GM12878 (cell line): ENCODE measurements at regions of chr7 and their contacts with region 1.

Region 1: GRCh38 chr7:43108255-43109011 is 4.0 kb upstream of the HECW1 start:
- DNase-seq: peak; percentile 31
- ATAC-seq: peak; percentile 88
- H3K4me3 ChIP-seq: no peak overlapping the region
- H3K27ac ChIP-seq: no peak overlapping the region
- H3K4me1 ChIP-seq: no peaks in the 10 kb centered on the region
- H3K27me3 ChIP-seq: no peaks in the 10 kb centered on the region
- CTCF ChIP-seq: peak; percentile 89 to 98 (median 95); a peak in 5 of 6 replicates
- EP300 ChIP-seq: no peak
- POLR2A ChIP-seq: no peak
- RAD21 ChIP-seq: peak; percentile 86

Region 2: DNA sequence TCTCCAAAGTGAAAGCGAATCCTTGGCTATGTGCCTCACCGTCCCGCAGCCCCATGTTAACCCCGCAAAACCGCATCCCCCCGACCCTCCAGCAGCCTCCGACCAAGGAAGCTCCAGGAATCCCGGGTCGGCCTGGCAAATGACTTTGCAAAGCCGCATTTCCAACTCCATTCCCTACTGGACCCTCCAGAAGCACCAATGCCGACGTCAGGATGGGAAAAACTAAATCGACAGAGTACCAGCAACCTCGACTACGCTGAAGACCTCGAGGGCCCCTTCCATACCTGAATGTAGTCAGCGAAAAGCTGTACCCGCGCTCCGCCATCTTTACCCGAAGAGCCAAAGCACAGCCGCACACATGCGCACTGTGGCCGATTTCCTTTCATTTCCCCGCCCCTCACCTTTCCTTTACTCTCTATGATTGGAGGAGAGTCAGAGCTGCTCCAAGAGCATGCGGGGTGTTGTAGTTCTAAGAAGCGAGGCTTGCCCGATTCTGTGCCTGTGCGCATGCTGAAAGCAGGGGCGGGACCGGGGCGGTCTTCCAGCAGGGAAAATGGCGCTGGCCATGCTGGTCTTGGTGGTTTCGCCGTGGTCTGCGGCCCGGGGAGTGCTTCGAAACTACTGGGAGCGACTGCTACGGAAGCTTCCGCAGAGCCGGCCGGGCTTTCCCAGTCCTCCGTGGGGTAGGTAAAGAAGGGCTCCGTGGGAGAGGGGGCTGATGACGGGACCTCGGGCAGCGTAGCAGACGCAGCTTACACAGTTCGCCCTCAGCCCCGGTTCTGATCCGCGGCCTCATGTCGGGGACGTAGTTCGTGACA is 176.4 kb before region 1 on chr7 and contains the starts of genes MRPL32 and PSMA2:
- CTCF ChIA-PET with region 1: interaction called, 4 read pairs
- POLR2A ChIA-PET with region 1: no interaction called
- RAD21 ChIA-PET with region 1: interaction called, 10 read pairs
- SMC1A ChIA-PET with region 1: interaction called, 9 read pairs
- in situ Hi-C with region 1: no loop called
- intact Hi-C with region 1: no loop called
- DNase-seq: peak; percentile 95
- ATAC-seq: peak; percentile 97
- H3K4me3 ChIP-seq: peak within 1 kb of the TSS; percentile 94
- H3K27ac ChIP-seq: peak within 1 kb of the TSS; percentile 86
- H3K4me1 ChIP-seq: peaks cover 15% of the 10 kb centered on the region; the same call in 1 of the 2 replicates
- H3K27me3 ChIP-seq: no peaks in the 10 kb centered on the region
- CTCF ChIP-seq: no peak
- EP300 ChIP-seq: no peak
- POLR2A ChIP-seq: peak; percentile 96
- RAD21 ChIP-seq: no peak
- polyA plus RNA-seq, gene MRPL32: 274 to 339 TPM
- polyA plus RNA-seq, gene PSMA2: 1,068 to 1,223 TPM

Region 3: GRCh38 chr7:42960762-42961161 is 147.7 kb before region 1 on chr7:
- CTCF ChIA-PET with region 1: interaction called, 14 read pairs
- POLR2A ChIA-PET with region 1: no interaction called
- RAD21 ChIA-PET with region 1: interaction called, 3 read pairs
- SMC1A ChIA-PET with region 1: interaction called, 3 read pairs
- in situ Hi-C with region 1: no loop called
- intact Hi-C with region 1: no loop called
- DNase-seq: no peak
- ATAC-seq: peak; percentile 90
- H3K4me3 ChIP-seq: no peak overlapping the region
- H3K27ac ChIP-seq: no peak overlapping the region
- H3K4me1 ChIP-seq: no peaks in the 10 kb centered on the region
- H3K27me3 ChIP-seq: no peaks in the 10 kb centered on the region
- CTCF ChIP-seq: no peak
- EP300 ChIP-seq: no peak
- POLR2A ChIP-seq: no peak
- RAD21 ChIP-seq: no peak

Region 4: DNA sequence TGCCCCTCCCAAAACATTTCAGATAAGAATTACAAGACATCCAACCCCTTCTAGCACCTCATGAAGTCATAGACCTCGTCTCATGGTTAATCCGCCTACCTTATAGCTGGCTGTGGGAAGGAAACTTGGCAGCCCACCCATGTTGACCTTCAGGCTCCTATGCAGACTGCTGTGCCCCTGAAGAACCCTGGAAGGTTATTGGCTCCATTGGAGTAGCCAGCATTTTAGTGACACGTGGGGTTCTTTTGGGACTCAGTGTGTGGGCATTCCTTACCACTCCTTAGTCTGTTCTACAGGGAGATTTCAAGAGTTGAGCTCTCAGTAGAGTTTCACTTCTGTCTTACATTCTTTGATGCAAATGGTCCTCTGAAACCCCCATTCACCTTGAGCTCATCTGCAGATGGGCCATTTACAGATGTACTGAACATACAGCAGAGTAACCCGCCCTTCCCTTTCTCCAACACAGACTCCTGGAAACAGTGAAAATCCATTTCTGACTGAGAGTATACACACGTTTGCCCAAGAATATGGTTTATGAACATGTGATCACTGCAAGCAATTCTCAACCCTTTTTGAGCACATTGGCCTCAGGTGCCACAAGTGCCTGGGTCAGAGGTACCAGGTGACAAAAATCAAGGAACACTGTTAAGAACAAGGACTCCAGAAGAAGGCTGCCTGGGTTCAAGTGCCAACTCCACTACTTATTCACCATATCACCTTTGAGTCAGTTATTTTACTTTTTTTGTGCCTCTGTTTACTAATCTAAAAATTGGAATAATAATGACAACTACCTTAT is 50.0 kb before region 1 on chr7:
- CTCF ChIA-PET with region 1: interaction called, 11 read pairs
- POLR2A ChIA-PET with region 1: no interaction called
- RAD21 ChIA-PET with region 1: interaction called, 4 read pairs
- SMC1A ChIA-PET with region 1: interaction called, 5 read pairs
- in situ Hi-C with region 1: no loop called
- intact Hi-C with region 1: no loop called
- DNase-seq: peak; percentile 53
- ATAC-seq: peak; percentile 61
- H3K4me3 ChIP-seq: no peak overlapping the region
- H3K27ac ChIP-seq: no peak overlapping the region
- H3K4me1 ChIP-seq: peaks cover 17% of the 10 kb centered on the region
- H3K27me3 ChIP-seq: no peaks in the 10 kb centered on the region
- CTCF ChIP-seq: no peak
- EP300 ChIP-seq: no peak
- POLR2A ChIP-seq: no peak
- RAD21 ChIP-seq: no peak

Region 5: DNA sequence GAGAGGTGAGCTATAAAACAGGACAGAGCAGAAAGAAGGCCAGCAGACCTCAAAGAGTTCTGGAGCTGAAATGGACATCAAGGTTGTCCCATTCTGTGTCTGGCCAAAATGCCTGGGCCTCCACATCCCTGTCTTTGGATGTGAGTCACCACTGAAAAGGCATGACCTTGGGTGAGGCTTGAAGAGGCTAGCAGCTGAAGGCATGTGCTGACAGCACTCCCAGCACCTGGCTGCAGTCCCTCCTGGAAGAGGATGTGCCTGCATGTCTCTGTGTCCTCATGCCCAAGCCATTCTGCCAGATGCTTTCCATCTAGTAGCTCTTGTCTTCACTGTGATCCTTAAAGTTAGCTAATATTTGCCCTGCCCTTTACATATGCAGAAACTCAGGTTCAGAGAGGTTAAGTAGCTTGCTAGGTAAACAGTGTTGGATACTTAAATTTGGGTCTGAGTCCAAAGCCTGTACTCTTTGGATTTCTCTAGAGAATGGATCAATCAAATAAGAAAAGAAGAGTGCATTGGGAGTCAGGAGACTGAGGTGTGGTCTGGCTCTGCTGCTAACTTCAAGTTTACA is 39.8 kb after region 1 on chr7:
- CTCF ChIA-PET with region 1: no interaction called
- POLR2A ChIA-PET with region 1: no interaction called
- RAD21 ChIA-PET with region 1: no interaction called
- SMC1A ChIA-PET with region 1: no interaction called
- in situ Hi-C with region 1: no loop called
- intact Hi-C with region 1: no loop called
- DNase-seq: no peak
- ATAC-seq: no peak
- H3K4me3 ChIP-seq: no peak overlapping the region
- H3K27ac ChIP-seq: no peak overlapping the region
- H3K4me1 ChIP-seq: no peaks in the 10 kb centered on the region
- H3K27me3 ChIP-seq: no peaks in the 10 kb centered on the region; a peak in 1 of 4 replicates
- CTCF ChIP-seq: no peak
- EP300 ChIP-seq: no peak
- POLR2A ChIP-seq: no peak
- RAD21 ChIP-seq: no peak

Region 6: GRCh38 chr7:43170571-43170970 is 62.1 kb after region 1 on chr7:
- CTCF ChIA-PET with region 1: interaction called, 10 read pairs
- POLR2A ChIA-PET with region 1: no interaction called
- RAD21 ChIA-PET with region 1: no interaction called
- SMC1A ChIA-PET with region 1: no interaction called
- in situ Hi-C with region 1: no loop called
- intact Hi-C with region 1: no loop called
- DNase-seq: no peak
- ATAC-seq: peak; percentile 11; the same call in 1 of the 3 replicates
- H3K4me3 ChIP-seq: no peak overlapping the region
- H3K27ac ChIP-seq: no peak overlapping the region
- H3K4me1 ChIP-seq: no peaks in the 10 kb centered on the region
- H3K27me3 ChIP-seq: no peaks in the 10 kb centered on the region
- CTCF ChIP-seq: no peak
- EP300 ChIP-seq: no peak
- POLR2A ChIP-seq: no peak
- RAD21 ChIP-seq: no peak